WTC11 (cell line): ENCODE measurements at regions of chr17 and their contacts with region 1.

Region 1: GRCh38 chr17:43840814-43841213 is 6.2 kb upstream of the CD300LG start:
- DNase-seq: no peak
- ATAC-seq: peak; percentile 65
- H3K4me3 Mint-ChIP-seq: no peak overlapping the region
- H3K27ac Mint-ChIP-seq: no peak overlapping the region
- H3K4me1 Mint-ChIP-seq: peaks cover 12% of the 10 kb centered on the region
- H3K27me3 Mint-ChIP-seq: no peaks in the 10 kb centered on the region
- CTCF ChIP-seq: no peak

Region 2: GRCh38 chr17:43791589-43791988 is 49.2 kb before region 1 on chr17:
- CTCF ChIA-PET with region 1: interaction called, 66 read pairs
- POLR2A ChIA-PET with region 1: interaction called, 3 read pairs
- DNase-seq: no peak
- ATAC-seq: peak; percentile 80
- H3K4me3 Mint-ChIP-seq: peak overlapping the region; percentile 32; the same call in 1 of the 2 replicates
- H3K27ac Mint-ChIP-seq: no peak overlapping the region
- H3K4me1 Mint-ChIP-seq: peaks cover 8% of the 10 kb centered on the region
- H3K27me3 Mint-ChIP-seq: peaks cover 27% of the 10 kb centered on the region
- CTCF ChIP-seq: no peak

Region 3: DNA sequence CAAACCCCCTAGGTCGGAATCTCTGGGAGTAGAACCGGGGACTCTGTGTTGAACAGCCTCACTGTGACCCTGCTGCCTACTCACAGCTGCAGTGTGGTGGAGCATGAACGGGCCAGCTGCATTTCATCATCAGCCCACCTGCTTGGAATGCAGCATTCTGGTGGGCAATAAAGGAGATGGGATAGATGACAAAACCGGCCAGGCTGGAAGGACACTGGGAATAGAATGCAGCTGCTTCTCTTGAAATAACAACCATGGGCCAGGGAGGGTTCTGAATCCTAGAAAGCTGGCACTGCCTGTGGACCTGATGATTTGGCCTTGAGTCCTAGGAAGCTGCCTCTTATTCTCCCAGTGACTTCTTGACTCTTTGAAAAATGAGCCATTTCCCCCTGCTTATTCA is 37.1 kb before region 1 on chr17:
- CTCF ChIA-PET with region 1: interaction called, 17 read pairs
- POLR2A ChIA-PET with region 1: interaction called, 5 read pairs
- DNase-seq: peak; percentile 39
- ATAC-seq: peak; percentile 90
- H3K4me3 Mint-ChIP-seq: 0 out of 2 replicates have a peak overlapping the region, but pooled peaks have one; percentile 2
- H3K27ac Mint-ChIP-seq: peak overlapping the region; percentile 82
- H3K4me1 Mint-ChIP-seq: peaks cover 43% of the 10 kb centered on the region
- H3K27me3 Mint-ChIP-seq: no peaks in the 10 kb centered on the region
- CTCF ChIP-seq: no peak

Region 4: DNA sequence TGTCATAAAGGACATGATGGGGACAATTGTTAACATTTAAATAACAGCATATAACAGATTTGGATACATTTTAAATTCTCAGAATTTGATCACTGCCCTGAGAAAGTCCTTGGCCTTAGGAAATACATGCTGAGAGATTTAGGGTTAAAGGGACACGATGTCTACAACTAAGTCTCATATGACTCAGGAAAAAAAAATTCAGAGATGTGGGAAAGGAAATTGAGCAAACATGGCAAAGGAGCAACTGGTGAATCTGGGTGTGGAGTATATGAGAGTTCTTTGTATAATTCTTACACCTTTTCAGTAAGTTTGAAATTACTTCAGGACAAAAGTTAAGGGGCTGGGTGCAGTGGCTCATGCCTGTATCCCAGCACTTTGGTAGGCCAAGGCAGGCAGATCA is 26.1 kb before region 1 on chr17:
- CTCF ChIA-PET with region 1: interaction called, 78 read pairs
- POLR2A ChIA-PET with region 1: interaction called, 4 read pairs
- DNase-seq: no peak
- ATAC-seq: no peak
- H3K4me3 Mint-ChIP-seq: no peak overlapping the region
- H3K27ac Mint-ChIP-seq: 0 out of 2 replicates have a peak overlapping the region, but pooled peaks have one; percentile 1
- H3K4me1 Mint-ChIP-seq: peaks cover 24% of the 10 kb centered on the region
- H3K27me3 Mint-ChIP-seq: no peaks in the 10 kb centered on the region
- CTCF ChIP-seq: no peak

Region 5: DNA sequence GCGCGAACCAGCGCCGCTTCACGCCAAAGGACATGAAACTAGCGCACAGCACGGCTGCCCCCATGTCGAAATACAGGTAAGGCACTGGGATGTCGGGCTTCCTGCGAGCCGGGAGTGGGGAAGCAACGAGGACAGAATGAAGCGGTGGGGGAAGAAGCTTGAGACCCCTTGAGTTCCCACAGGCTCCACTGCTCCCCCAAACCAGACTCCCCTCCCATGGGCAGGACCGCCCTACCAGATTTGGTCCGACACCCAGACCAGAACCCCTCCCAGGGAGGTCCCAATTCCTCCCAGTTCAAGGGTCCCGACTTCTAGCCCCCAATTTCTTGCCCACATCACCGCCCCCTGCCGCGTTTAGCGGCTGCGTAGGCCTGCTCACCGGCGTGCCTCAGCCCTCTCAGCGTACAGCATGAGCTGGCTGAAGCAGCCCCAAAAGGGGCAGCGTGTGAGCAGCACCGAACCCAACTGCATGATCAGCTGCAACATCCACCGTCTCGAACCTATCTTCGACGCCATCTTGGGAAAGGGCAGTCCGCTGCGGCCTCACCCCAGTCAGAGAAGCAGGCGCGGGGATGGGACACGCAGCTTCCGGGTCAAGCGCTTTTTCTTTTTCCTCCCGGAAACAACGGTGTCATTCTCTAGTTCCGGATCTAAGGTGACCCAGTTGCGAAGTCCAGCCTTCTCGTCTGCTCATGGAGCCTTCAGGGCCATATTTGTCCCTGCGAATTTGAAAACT is 173.8 kb after region 1 on chr17 and contains the start of gene TMEM101:
- CTCF ChIA-PET with region 1: no interaction called
- POLR2A ChIA-PET with region 1: no interaction called
- DNase-seq: peak; percentile 88
- ATAC-seq: peak; percentile 88
- H3K4me3 Mint-ChIP-seq: peak within 1 kb of the TSS; percentile 100
- H3K27ac Mint-ChIP-seq: peak within 1 kb of the TSS; percentile 100
- H3K4me1 Mint-ChIP-seq: peaks cover 8% of the 10 kb centered on the region
- H3K27me3 Mint-ChIP-seq: no peaks in the 10 kb centered on the region
- CTCF ChIP-seq: no peak
- total RNA-seq, gene TMEM101: 32.1 to 36.3 TPM (median 32.7 TPM) in 3 replicates